ENCODE measurements at regions of chr17 and their contacts with region 1.

Region 1: GRCh38 chr17:18960803-18961511 is 9.0 kb downstream of the SLC5A10 start:
- DNase-seq: peak; percentile 91
- CTCF ChIP-seq: peak; percentile 88

Region 2: GRCh38 chr17:18896146-18896545 is 64.8 kb before region 1 on chr17:
- CTCF ChIA-PET with region 1: interaction called, 10 read pairs
- POLR2A ChIA-PET with region 1: no interaction called
- DNase-seq: no peak
- CTCF ChIP-seq: no peak

Region 3: GRCh38 chr17:18937981-18938691 is 22.8 kb before region 1 on chr17:
- CTCF ChIA-PET with region 1: interaction called, 26 read pairs
- POLR2A ChIA-PET with region 1: no interaction called
- DNase-seq: no peak
- CTCF ChIP-seq: no peak

Region 4: DNA sequence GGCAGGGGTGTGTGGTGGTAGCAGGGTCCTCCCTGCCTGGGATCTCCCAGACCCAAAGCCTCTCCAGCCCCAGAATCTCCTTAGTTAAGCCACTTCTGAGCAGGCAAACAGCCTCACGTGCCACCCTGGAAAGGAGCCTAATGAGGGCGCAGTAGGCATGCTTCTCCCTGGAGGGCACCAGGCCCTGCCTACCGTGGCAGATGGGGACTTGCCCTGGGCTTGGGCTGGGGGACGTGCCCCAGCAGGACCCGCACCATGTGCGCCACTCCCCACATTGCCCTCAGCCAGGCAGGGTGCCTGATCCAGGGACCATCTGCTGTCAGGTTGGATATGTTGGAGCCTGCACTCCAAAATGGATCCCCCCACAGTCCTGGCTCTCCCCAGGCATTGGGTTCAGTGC is 29.4 kb after region 1 on chr17:
- CTCF ChIA-PET with region 1: interaction called, 16 read pairs
- POLR2A ChIA-PET with region 1: no interaction called
- DNase-seq: no peak
- CTCF ChIP-seq: no peak

Region 5: GRCh38 chr17:19004421-19005136 is 43.6 kb after region 1 on chr17 and contains the start of gene FAM83G:
- CTCF ChIA-PET with region 1: interaction called, 28 read pairs
- POLR2A ChIA-PET with region 1: interaction called, 3 read pairs
- DNase-seq: peak; percentile 90
- CTCF ChIP-seq: no peak

Measured in GM10248 (cell line).